ENCODE measurements at regions of chr12 and their contacts with region 1.

Region 1: GRCh38 chr12:132003846-132004245 is 54.1 kb downstream of the EP400 start:
- DNase-seq: no peak
- H3K4me3 ChIP-seq: no peak overlapping the region
- H3K27ac ChIP-seq: no peak overlapping the region
- H3K4me1 ChIP-seq: no peaks in the 10 kb centered on the region
- H3K27me3 ChIP-seq: no peaks in the 10 kb centered on the region
- CTCF ChIP-seq: no peak

Region 2: GRCh38 chr12:130916251-130916911 is 1087.5 kb before region 1 on chr12:
- CTCF ChIA-PET with region 1: no interaction called
- dilution Hi-C with region 1: no loop called
- in situ Hi-C with region 1: no loop called
- intact Hi-C with region 1: loop called (anchors 2 kb)
- DNase-seq: peak; percentile 21
- H3K4me3 ChIP-seq: no peak overlapping the region
- H3K27ac ChIP-seq: no peak overlapping the region
- H3K4me1 ChIP-seq: no peaks in the 10 kb centered on the region
- H3K27me3 ChIP-seq: no peaks in the 10 kb centered on the region
- CTCF ChIP-seq: peak; percentile 59 to 87

Region 3: DNA sequence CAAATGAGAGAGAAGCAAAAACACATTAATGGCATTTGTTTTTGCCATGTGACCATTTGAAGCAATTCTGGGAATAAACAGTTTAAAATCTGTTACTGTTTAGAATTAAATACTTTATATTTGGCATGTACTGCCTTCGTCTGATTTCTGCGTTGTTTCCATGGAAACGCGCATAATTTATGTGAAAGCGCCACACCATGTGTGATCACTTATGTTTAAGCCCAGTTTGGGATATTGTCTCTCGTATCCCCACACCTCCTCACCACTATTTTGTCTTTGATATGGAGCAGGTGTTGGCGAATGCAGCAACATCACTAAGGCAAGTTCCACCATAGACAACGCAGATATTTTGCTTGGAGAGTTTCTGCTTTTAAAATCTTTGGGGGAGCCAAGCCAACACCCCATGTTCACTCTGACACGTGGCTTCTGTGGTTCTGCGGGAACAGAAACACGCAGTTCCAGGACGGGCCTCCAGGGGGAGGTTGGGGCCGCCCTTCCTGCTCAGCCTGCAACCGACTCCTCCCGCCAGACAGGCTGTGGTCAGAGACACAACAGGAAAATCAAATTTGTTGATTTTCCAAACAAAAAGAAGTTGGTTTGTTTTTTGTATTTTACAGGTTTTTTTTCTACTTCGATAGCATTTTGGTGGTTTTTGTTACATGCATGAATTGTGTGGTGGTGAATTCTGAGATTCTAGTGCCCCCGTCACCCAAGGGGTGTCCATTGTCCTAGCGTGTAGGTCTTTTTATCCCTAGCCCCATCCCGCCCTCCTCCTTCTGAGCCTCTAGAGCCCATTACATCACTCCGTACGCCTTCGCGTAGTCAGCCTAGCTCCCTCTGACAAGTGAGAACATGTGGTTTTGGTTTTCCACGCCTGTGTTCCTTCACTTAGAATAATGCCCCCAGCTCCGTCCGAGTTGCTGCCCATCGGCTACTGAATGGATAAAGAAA is 394.8 kb before region 1 on chr12:
- CTCF ChIA-PET with region 1: no interaction called
- dilution Hi-C with region 1: no loop called
- in situ Hi-C with region 1: no loop called
- intact Hi-C with region 1: loop called (anchors 5 kb)
- DNase-seq: peak; percentile 23
- H3K4me3 ChIP-seq: no peak overlapping the region
- H3K27ac ChIP-seq: no peak overlapping the region
- H3K4me1 ChIP-seq: no peaks in the 10 kb centered on the region
- H3K27me3 ChIP-seq: no peaks in the 10 kb centered on the region
- CTCF ChIP-seq: peak; percentile 41 to 66

Region 4: DNA sequence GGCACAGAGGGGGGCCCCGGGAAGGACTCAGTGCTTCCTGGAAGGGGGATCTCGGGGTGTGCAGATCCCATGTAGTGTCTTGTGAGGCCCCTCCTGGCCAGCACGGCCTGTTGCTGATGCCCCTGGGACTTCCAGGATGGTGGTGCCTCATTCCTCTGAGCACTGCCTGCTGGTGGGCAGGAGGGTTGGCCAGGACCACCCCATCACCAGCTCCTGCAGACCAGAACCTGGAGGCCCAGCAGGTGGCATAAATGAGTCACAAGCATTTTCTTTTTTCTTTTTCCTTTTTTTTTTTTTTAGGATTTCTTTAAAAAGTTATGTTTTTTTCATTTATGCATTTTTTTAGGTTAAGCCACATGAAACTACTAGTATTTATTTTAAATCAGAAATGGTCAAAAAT is 167.7 kb before region 1 on chr12:
- CTCF ChIA-PET with region 1: no interaction called
- dilution Hi-C with region 1: no loop called
- in situ Hi-C with region 1: no loop called
- intact Hi-C with region 1: loop called (anchors 1 kb)
- DNase-seq: no peak
- H3K4me3 ChIP-seq: no peak overlapping the region
- H3K27ac ChIP-seq: no peak overlapping the region
- H3K4me1 ChIP-seq: peaks cover 19% of the 10 kb centered on the region
- H3K27me3 ChIP-seq: no peaks in the 10 kb centered on the region
- CTCF ChIP-seq: peak; percentile 14 to 51

Region 5: DNA sequence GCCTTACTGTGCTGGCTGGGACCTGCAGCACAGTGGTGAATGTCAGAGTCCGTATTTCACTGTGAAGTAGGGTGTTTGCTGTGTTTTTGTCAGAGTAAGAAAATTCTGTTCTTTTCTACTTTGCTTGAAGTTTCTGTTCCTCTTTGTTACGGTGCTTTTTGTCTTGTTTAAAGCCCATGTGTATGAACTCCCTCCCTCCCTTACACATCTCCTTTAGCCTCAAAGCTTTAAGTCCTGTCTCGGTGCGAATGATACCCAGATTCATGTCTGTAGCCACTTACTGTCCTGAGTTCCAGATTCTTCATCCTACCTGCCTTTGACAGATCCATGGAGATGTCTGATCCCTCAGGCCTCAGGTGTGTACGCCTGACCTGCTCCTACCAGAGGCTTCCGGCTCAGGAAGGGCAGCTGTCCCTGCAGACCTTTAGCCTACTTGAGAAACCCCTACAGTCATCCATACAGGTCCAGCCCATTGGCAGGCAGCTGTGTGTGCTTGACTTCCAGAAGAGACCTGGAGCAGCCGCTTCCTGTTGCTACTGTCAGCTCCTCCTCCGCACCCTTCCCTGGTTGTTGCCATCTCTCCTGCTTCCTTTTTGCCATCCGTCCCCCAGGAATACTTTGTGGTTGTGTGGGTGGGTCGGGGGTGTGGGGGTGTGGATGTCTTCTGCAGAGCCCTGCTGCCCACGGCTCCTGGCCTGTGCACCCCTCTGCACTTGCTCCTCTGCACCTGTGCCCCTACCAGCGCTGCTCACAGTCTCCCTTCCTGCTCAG is 67.4 kb after region 1 on chr12:
- CTCF ChIA-PET with region 1: no interaction called
- dilution Hi-C with region 1: no loop called
- in situ Hi-C with region 1: no loop called
- intact Hi-C with region 1: no loop called
- DNase-seq: no peak
- H3K4me3 ChIP-seq: no peak overlapping the region
- H3K27ac ChIP-seq: no peak overlapping the region
- H3K4me1 ChIP-seq: no peaks in the 10 kb centered on the region
- H3K27me3 ChIP-seq: no peaks in the 10 kb centered on the region
- CTCF ChIP-seq: no peak

Measured in mammary epithelial cell (primary cell).